Panc1 (cell line): ENCODE measurements at regions of chr3 and their contacts with region 1.

Region 1: DNA sequence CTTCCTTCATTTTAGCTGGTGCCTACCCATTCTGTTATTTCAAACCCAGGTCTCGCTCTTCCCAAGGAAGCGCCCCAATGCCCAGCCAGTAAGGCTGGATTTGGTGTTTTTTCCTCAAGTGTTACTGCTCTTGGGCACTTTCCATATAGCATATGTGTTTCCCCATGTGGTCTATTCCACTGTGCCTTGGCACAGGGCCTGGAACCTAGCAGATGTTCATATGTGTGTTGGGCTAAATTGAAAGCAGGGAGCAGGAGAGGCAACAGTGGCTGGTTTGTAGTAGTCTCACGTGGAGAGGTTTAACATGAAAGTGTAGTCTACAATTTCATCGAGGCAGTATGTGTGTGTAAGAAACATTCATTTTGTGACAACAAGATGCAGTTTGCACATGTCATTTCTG is 48.2 kb upstream of the TEX264 start:
- DNase-seq: no peak
- ATAC-seq: no peak
- H3K4me3 ChIP-seq: no peak overlapping the region
- H3K27ac ChIP-seq: no peak overlapping the region
- H3K4me1 ChIP-seq: no peaks in the 10 kb centered on the region
- H3K27me3 ChIP-seq: no peaks in the 10 kb centered on the region
- CTCF ChIP-seq: no peak

Region 2: GRCh38 chr3:51477360-51477711 is 145.5 kb before region 1 on chr3:
- CTCF ChIA-PET with region 1: interaction called, 10 read pairs
- POLR2A ChIA-PET with region 1: no interaction called
- in situ Hi-C with region 1: no loop called
- intact Hi-C with region 1: no loop called
- DNase-seq: no peak
- ATAC-seq: no peak
- H3K4me3 ChIP-seq: no peak overlapping the region
- H3K27ac ChIP-seq: no peak overlapping the region
- H3K4me1 ChIP-seq: no peaks in the 10 kb centered on the region
- H3K27me3 ChIP-seq: no peaks in the 10 kb centered on the region
- CTCF ChIP-seq: no peak

Region 3: GRCh38 chr3:52524752-52525679 is 902.1 kb after region 1 on chr3:
- CTCF ChIA-PET with region 1: no interaction called
- POLR2A ChIA-PET with region 1: no interaction called
- in situ Hi-C with region 1: no loop called
- intact Hi-C with region 1: no loop called
- DNase-seq: no peak
- ATAC-seq: no peak
- H3K4me3 ChIP-seq: no peak overlapping the region
- H3K27ac ChIP-seq: no peak overlapping the region
- H3K4me1 ChIP-seq: no peaks in the 10 kb centered on the region; the same call in 1 of the 2 replicates
- H3K27me3 ChIP-seq: no peaks in the 10 kb centered on the region
- CTCF ChIP-seq: no peak